B cell (primary cell): ENCODE measurements at regions of chr20 and their contacts with region 1.

Region 1: DNA sequence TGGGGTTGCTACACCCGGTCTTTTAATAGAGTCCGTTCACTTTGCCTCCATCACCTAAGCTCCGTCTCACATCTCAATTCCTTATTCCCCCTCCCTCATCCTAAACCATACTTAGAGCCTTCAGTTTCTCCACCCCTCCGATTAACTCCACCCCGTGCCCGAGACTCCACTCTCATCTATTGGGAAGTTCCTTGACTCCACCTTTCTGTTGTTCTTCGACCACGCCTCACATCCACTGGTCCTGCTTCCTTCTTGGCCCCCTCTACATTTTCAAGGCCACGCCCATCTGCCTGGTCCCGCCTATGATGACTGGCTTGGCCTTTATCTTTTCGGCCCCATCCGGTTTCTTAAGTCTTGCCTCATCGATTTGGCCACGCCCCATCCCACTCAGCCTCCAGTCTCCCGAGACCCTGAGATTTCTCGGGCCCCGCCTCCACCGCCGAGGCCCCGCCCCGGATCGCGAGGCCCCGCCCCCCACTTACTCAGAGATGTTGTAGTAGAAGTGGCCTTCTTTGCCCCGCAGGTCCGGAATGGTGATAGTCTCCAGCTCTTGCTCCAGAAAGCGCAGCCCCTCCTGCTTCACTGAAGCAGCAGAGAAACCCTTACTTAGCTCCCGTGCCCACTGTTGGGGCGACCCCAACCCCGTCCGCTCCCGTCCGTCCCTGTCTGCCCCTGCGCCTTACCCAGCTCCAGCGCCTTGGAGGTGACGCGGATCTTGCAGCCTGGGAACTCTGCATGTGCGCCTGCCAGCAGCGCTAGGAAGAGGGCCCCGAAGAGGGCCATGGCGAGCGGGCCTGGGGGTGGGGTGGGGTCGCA is 1.1 kb downstream of the PLTP start:
- DNase-seq: peak; percentile 95
- ATAC-seq: peak; percentile 93
- H3K4me3 ChIP-seq: peak overlapping the region in 4 of 5 experiments; percentile 37 to 65 (median 60)
- H3K4me3 Mint-ChIP-seq: peak overlapping the region; percentile 94
- H3K27ac ChIP-seq: no peak overlapping the region
- H3K27ac Mint-ChIP-seq: peak overlapping the region; percentile 28
- H3K4me1 ChIP-seq: peaks cover 14 to 22% of the 10 kb centered on the region in 2 donors
- H3K4me1 Mint-ChIP-seq: peaks cover 20% of the 10 kb centered on the region
- H3K27me3 ChIP-seq: peaks cover 0 to 19% (median 9%) of the 10 kb centered on the region in 4 experiments
- H3K27me3 Mint-ChIP-seq: peaks cover 7% of the 10 kb centered on the region
- CTCF ChIP-seq: no peak

Region 2: DNA sequence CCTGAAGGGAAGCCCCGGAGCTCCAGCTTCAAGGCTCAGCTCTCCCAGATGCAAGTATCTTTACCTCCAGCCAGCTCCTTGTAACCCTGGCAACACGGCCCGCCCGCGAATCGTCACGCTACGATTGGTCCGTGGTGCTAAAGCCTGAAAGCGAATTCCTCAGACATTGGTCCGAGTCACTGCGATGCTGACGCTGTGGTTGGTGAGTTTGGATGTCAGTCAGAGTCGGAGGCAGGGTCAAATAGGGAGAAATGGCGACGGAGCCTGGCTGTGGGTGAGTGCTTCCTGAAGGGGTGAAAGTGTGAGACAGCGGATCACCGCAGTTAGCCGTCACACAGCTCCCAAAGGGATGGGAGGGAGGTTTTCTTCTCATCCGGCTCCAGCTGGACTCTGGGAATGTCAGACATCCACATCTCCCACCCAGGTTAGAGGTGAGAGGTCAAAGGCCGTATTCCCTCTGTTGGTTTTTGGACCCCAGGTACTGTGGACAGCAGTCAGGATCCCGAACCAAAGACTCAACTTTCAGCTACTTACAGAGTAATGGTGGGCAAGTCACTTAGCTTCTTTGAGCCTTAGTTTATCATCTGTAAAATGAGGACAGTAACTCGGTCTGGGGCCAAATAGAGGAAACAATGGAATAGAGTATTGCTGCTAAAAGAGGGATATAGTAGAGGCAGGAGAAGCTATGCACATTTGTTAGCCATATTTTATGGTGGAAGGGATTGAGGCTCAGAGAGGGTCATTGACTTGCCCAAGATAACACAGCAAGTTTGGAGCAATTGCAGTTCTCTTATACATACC is 29.7 kb before region 1 on chr20 and contains the start of gene ZSWIM1:
- CTCF ChIA-PET with region 1: no interaction called
- POLR2A ChIA-PET with region 1: interaction called, 4 read pairs
- intact Hi-C with region 1: loop called (anchors 1 kb)
- DNase-seq: peak; percentile 99
- ATAC-seq: peak; percentile 99
- H3K4me3 ChIP-seq: peak within 1 kb of the TSS; percentile 76 to 96 (median 86)
- H3K4me3 Mint-ChIP-seq: peak within 1 kb of the TSS; percentile 91
- H3K27ac ChIP-seq: peak within 1 kb of the TSS; percentile 82 to 89
- H3K27ac Mint-ChIP-seq: peak within 1 kb of the TSS; percentile 90
- H3K4me1 ChIP-seq: peaks cover 3 to 19% of the 10 kb centered on the region in 2 donors
- H3K4me1 Mint-ChIP-seq: peaks cover 33% of the 10 kb centered on the region
- H3K27me3 ChIP-seq: no peaks in the 10 kb centered on the region
- H3K27me3 Mint-ChIP-seq: no peaks in the 10 kb centered on the region
- CTCF ChIP-seq: no peak
- total RNA-seq, gene ZSWIM1: 15.7 and 18.5 TPM in 2 replicates

Region 3: GRCh38 chr20:45987108-45987780 is 76.4 kb after region 1 on chr20:
- CTCF ChIA-PET with region 1: no interaction called
- POLR2A ChIA-PET with region 1: no interaction called
- intact Hi-C with region 1: no loop called
- DNase-seq: peak; percentile 82
- ATAC-seq: peak; percentile 98
- H3K4me3 ChIP-seq: no peak overlapping the region
- H3K4me3 Mint-ChIP-seq: no peak overlapping the region
- H3K27ac ChIP-seq: no peak overlapping the region
- H3K27ac Mint-ChIP-seq: no peak overlapping the region
- H3K4me1 ChIP-seq: peaks cover 4 to 12% of the 10 kb centered on the region in 2 donors
- H3K4me1 Mint-ChIP-seq: peaks cover 6% of the 10 kb centered on the region
- H3K27me3 ChIP-seq: peaks cover 0 to 27% (median 10%) of the 10 kb centered on the region in 4 experiments
- H3K27me3 Mint-ChIP-seq: peaks cover 20% of the 10 kb centered on the region
- CTCF ChIP-seq: peak; percentile 93